ENCODE measurements at regions of chr14 and their contacts with region 1.

Region 1: DNA sequence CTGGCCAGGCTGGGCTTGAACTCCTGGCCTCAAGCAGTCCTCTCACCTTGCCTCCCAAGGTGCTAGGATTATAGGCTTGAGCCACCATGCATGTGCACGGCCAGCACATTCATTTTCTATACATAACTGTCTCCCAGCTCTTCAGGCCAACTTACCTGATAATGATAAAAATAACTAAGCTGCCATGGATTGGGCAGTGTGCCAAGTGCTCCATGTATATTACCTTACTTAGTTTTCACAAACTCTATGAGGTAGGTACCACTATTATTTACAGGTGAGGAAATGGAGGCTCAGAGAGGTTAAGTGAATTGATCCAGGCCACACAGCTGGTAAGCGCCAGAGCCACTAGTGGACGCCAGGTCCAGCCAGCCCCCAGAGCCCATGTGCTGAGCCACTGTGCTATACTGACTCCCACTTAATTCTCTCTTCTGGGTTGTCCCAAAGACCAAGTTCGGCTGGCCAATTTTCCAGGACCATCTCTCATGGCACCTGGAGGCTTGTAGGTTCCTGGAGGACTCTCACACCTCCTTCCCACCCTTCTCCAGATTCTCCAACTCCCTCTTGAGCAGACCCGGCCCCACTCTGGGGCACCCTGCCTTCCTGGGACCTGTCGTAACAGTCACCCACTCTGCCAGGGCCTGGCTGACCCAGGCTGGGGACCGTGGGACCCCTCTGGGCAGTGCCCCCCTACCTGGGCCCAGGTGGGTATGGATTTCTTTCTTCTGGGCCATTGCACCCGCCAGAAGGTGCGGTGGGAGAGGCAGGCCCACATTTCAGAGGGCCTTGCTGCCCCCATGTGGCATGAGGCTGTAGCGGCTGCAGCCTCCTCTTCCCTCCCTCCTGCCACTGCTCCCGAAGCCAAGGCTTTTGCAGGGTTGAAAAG is 30.2 kb upstream of the CIPC start:
- DNase-seq: peak; percentile 84
- H3K4me3 Mint-ChIP-seq: no peak overlapping the region
- H3K27ac Mint-ChIP-seq: no peak overlapping the region
- H3K4me1 Mint-ChIP-seq: peaks cover 25% of the 10 kb centered on the region
- H3K27me3 Mint-ChIP-seq: no peaks in the 10 kb centered on the region
- CTCF ChIP-seq: peak; percentile 88

Region 2: DNA sequence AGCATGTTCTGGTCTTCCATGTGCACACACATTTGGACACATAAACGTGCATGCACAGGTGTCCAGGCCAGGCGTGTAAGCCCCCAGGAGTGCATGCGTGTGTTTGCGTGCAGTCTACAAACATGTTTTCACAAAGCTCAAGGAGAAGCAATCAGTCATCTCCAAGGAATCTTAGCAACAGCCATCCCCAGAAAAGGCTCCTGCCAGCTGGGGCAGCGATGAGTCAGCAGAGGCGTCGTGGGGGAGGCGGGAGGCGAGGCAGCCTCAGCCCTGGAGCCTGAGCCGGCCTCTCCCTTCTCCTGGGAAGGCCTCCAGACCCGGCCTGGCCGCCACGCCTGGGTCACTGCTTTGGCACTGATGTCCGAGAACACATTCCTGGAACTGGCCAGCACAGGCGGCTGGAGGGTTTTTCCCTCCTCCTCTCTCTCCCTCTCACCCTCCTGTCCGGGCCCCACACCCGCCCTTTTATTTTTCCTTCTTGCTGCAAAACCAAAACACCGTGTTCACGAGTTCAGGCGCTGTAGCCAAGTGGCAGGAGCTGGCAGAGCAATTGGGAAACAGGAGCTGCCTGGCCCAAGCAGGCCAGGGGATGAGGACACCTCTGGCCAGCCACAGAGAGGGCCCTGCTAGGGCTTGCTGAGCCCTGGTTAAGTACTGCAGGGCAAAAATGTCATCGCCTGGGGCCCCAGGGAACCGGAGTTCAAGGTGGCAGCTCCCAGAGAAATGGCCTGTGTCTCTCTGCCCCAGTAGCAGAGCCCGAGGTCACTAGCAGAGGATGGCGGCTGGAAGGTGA is 148.9 kb before region 1 on chr14:
- CTCF ChIA-PET with region 1: interaction called, 10 read pairs
- intact Hi-C with region 1: no loop called
- DNase-seq: peak; percentile 92
- H3K4me3 Mint-ChIP-seq: peak overlapping the region; percentile 55
- H3K27ac Mint-ChIP-seq: peak overlapping the region; percentile 84
- H3K4me1 Mint-ChIP-seq: peaks cover 63% of the 10 kb centered on the region
- H3K27me3 Mint-ChIP-seq: no peaks in the 10 kb centered on the region
- CTCF ChIP-seq: no peak

Region 3: DNA sequence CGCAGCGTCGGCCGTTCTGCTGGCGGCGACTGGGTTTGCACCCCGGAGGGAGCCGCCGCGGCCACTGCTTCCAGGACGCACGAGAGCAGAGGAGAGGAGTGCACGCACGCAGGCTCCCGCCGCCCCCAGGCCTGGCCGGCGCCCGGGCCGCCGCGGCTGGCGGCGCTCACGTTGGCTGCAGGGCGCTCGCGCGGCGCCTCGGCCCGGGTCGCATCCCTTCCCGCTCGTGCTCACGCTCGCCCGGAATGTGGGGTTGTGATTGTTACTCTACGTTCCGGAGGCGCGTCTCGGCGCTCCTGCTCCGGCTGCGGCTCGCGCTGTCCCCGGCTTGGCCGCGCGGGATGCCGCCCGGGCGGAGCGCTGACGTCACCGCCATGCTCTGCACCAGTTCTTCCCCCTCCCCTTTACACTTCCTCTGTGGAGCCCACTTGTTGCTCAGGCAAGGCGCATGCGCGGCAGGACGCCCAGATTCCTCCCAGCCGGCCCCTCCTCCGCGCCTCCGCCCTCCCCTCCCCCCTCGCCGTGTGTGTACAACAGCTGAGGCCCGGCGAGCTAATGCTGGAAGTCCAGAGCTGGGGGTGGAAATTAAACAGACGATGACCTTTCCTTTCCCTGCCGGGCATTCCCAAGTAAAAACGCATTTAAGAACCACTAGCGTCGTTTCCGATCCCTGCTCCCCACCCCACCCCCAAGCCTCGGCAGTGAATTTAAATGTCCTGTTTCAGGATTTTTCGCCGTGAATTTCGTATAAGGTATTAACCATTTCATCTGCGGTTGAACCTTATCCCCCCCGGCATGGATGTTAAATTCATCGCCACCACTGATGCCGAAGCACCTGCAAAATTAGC is 39.3 kb before region 1 on chr14 and contains the start of gene IRF2BPL:
- CTCF ChIA-PET with region 1: interaction called, 9 read pairs
- intact Hi-C with region 1: loop called (anchors 1 kb)
- DNase-seq: peak; percentile 95
- H3K4me3 Mint-ChIP-seq: peak within 1 kb of the TSS; percentile 75
- H3K27ac Mint-ChIP-seq: peak within 1 kb of the TSS; percentile 91
- H3K4me1 Mint-ChIP-seq: peaks cover 40% of the 10 kb centered on the region
- H3K27me3 Mint-ChIP-seq: no peaks in the 10 kb centered on the region
- CTCF ChIP-seq: no peak
- total RNA-seq, gene IRF2BPL: 30.1 and 33.1 TPM in 2 replicates

Region 4: DNA sequence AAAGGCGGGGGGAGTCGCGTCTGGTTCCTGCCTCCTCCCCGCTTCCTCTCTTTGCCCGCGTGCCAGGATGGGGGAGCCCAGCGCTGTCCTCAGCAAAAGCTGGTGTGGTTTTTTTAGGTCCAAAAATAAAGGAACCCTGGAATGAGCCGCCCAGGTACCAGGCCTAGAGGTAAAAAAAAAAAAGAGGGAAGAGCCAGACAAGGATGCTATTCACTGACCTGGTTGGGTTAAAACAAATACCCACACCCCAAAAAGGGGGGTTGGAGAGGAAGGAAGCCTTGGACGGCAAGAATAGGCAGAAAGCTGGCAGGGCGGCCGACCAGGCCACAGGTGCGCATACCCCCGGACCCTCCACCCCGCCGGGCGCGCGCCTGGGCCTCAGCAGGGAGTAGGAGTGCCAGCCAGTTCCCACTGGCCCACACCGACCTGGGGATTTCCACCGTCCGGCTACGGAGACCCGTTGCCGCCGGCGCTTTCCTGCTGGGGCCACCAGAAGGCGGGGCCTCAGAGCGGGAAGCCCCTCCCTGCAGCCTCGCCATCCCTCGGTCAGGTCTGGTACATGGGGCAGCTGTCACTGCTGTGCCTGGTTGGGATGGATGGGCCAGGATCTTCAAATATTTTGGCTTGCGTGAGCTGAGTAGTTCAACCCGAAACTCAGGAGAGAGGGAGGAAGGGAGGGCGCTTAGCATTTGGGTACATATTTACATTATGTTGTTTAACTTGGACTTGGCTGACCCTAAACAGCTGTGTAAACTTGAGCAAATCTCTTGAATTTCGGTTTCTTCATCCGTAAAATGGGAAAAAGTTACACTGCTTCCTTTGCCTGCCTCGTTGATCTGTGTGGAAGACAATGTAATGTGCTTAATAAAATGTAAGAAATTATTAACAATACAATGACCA is 34.0 kb before region 1 on chr14:
- CTCF ChIA-PET with region 1: interaction called, 3 read pairs
- intact Hi-C with region 1: loop called (anchors 1 kb)
- DNase-seq: peak; percentile 92
- H3K4me3 Mint-ChIP-seq: peak overlapping the region; percentile 79
- H3K27ac Mint-ChIP-seq: peak overlapping the region; percentile 62
- H3K4me1 Mint-ChIP-seq: peaks cover 54% of the 10 kb centered on the region
- H3K27me3 Mint-ChIP-seq: no peaks in the 10 kb centered on the region
- CTCF ChIP-seq: no peak

Region 5: DNA sequence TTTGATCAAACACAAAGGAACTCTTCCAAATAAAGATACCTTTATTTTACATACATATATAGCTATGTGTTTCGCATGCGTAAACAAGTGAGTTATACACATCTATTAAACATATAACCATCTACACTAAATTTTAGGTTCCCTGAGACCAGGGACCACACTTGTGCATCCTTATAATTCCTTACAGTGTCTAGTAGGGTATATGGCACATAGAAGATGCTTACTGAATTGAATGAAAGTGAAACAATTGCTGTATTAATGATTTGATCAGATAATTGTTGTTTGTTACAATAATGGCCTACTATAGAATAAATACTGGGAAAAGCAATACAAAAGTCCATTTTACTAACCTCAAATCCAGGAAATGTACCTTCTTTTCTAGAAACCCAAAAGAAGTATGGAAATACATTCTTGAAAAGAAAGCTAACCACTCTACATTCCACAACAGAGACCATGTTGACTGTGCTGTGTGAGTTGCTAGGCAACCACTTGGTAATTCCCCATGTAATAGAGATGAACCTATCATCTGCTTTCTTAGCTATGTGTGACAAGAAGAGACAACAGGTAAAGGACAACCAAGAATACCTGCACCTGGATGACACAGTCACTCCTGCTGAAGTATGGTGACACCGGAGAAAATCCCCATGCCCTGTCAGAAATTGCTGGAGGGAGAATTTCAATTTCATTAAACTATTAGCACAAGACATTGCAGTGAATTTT is 18.3 kb after region 1 on chr14:
- CTCF ChIA-PET with region 1: interaction called, 12 read pairs
- intact Hi-C with region 1: no loop called
- DNase-seq: no peak
- H3K4me3 Mint-ChIP-seq: no peak overlapping the region
- H3K27ac Mint-ChIP-seq: peak overlapping the region; percentile 52
- H3K4me1 Mint-ChIP-seq: peaks cover 31% of the 10 kb centered on the region
- H3K27me3 Mint-ChIP-seq: no peaks in the 10 kb centered on the region
- CTCF ChIP-seq: no peak

Region 6: GRCh38 chr14:77097700-77098528 is 30.0 kb after region 1 on chr14 and contains the start of gene CIPC:
- CTCF ChIA-PET with region 1: interaction called, 8 read pairs
- intact Hi-C with region 1: loop called (anchors 1 kb)
- DNase-seq: peak; percentile 98
- H3K4me3 Mint-ChIP-seq: peak within 1 kb of the TSS; percentile 97
- H3K27ac Mint-ChIP-seq: peak within 1 kb of the TSS; percentile 94
- H3K4me1 Mint-ChIP-seq: peaks cover 45% of the 10 kb centered on the region
- H3K27me3 Mint-ChIP-seq: no peaks in the 10 kb centered on the region
- CTCF ChIP-seq: no peak
- total RNA-seq, gene CIPC: 16.5 and 18.9 TPM in 2 replicates